ENCODE measurements at regions of chr17 and their contacts with region 1.

Region 1: DNA sequence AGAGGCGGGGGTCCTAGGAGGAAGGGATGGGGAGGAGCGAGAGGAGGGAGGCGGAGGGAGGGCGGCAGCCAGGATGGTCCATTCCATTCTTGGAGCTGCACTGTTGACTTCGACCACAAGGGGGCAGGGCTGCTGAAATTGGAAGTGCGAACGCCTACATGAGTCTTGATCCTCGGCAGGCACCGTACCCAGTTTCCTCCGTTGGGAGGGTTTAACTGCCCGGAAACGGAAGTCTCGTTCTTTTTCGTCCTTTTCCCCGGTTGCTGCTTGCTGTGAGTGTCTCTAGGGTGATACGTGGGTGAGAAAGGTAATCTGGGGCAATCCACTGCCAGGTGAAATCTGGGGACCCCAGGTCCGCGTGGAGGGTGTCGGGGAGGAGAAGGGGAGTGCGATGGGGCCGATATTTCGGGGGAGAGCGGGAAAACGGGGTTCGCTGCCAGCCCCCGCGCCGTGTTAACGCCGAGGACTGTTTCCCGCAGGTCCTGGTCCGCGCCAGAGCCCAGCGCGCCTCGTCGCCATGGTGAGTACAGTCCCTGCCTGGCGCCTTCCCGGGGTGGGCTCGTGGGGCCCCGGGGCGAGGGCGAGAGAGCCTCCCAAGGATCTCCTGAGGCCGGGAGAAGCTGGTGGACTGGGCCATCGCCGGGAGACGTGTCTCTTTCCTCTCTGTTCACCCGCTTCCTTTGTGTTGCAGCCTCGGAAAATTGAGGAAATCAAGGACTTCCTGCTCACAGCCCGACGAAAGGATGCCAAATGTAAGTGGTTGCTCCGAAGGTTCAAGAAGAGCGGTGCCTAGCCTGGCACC is at the start of gene RPL38:
- DNase-seq: peak; percentile 94
- H3K4me3 ChIP-seq: peak within 1 kb of the TSS; percentile 96
- H3K27ac ChIP-seq: peak within 1 kb of the TSS; percentile 88
- H3K27me3 ChIP-seq: peaks cover 13% of the 10 kb centered on the region
- CTCF ChIP-seq: peak; percentile 97
- polyA plus RNA-seq, gene RPL38: 2,243 and 2,383 TPM in 2 replicates

Region 2: GRCh38 chr17:73446617-73447016 is 757.0 kb before region 1 on chr17:
- CTCF ChIA-PET with region 1: interaction called, 11 read pairs
- POLR2A ChIA-PET with region 1: no interaction called
- DNase-seq: no peak
- H3K4me3 ChIP-seq: no peak overlapping the region
- H3K27ac ChIP-seq: no peak overlapping the region
- H3K27me3 ChIP-seq: no peaks in the 10 kb centered on the region
- CTCF ChIP-seq: no peak

Region 3: DNA sequence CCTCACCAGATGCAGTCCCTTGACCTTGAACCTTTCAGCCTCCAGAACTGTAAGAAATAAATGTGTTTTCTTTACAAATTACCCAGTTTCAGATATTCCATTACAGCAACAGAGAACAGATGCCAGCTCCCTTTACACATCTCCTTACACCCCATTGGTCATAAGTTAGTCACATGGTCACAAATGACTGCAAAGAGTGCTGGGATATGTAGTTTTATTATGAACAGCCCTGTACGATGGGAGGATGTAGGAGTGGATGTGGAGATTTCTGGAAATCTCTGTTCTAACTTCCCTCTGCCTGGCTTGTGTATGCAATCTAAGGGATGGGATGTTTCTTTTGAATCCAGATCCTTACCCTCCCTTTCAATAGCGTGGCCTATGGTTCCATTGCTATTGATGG is 13.5 kb before region 1 on chr17:
- CTCF ChIA-PET with region 1: interaction called, 31 read pairs
- POLR2A ChIA-PET with region 1: interaction called, 5 read pairs
- DNase-seq: no peak
- H3K4me3 ChIP-seq: no peak overlapping the region
- H3K27ac ChIP-seq: no peak overlapping the region
- H3K27me3 ChIP-seq: peaks cover 4% of the 10 kb centered on the region
- CTCF ChIP-seq: no peak

Measured in AG04450 (cell line).